Stomach (tissue), 19 donors: ENCODE measurements at regions of chr15 and their contacts with region 1.

Region 1: GRCh38 chr15:74768771-74769342 is 13.0 kb upstream of the CSK start:
- DNase-seq: peak; percentile 75
- H3K4me3 ChIP-seq: no peak overlapping the region
- H3K27ac ChIP-seq: no peak overlapping the region
- H3K4me1 ChIP-seq: peaks cover 0 to 18% (median 15%) of the 10 kb centered on the region in 4 donors
- H3K27me3 ChIP-seq: peaks cover 0 to 23% (median 0%) of the 10 kb centered on the region in 3 donors
- CTCF ChIP-seq: peak in 5 of 7 experiments; percentile 59 to 87 (median 74)
- EP300 ChIP-seq: no peak
- POLR2A ChIP-seq: no peak

Region 2: DNA sequence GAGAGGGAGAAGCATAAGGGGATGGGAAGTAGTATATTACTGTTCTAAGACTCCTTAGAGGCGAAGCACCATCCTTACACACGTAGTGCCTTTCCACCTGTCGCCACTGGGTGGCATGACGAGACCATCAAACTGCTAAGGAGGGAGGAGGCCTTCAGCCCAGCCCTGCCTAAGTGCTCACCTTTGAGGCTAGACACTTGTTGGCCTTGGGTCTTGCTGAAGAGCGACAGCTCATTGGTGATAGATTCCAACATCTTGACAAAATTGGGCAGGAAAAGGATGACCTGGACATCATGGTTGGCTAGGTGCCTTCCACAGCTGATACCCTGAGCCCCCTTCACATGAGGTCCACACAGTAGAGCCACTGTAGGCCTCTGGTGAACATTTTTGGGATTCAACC is 133.6 kb before region 1 on chr15:
- intact Hi-C with region 1: loop called (anchors 5 kb)
- DNase-seq: peak; percentile 72 to 86
- H3K4me3 ChIP-seq: no peak overlapping the region
- H3K27ac ChIP-seq: no peak overlapping the region
- H3K4me1 ChIP-seq: no peaks in the 10 kb centered on the region
- H3K27me3 ChIP-seq: no peaks in the 10 kb centered on the region
- CTCF ChIP-seq: peak in 5 of 7 experiments; percentile 82 to 92 (median 89)
- EP300 ChIP-seq: no peak
- POLR2A ChIP-seq: no peak

Region 3: GRCh38 chr15:74835307-74835823 is 66.5 kb after region 1 on chr15:
- intact Hi-C with region 1: loop called (anchors 5 kb)
- DNase-seq: peak; percentile 68 to 78
- H3K4me3 ChIP-seq: no peak overlapping the region
- H3K27ac ChIP-seq: no peak overlapping the region
- H3K4me1 ChIP-seq: peaks cover 0 to 16% (median 2%) of the 10 kb centered on the region in 4 donors
- H3K27me3 ChIP-seq: no peaks in the 10 kb centered on the region
- CTCF ChIP-seq: peak in 5 of 7 experiments; percentile 26 to 74 (median 64)
- EP300 ChIP-seq: no peak
- POLR2A ChIP-seq: no peak

Region 4: DNA sequence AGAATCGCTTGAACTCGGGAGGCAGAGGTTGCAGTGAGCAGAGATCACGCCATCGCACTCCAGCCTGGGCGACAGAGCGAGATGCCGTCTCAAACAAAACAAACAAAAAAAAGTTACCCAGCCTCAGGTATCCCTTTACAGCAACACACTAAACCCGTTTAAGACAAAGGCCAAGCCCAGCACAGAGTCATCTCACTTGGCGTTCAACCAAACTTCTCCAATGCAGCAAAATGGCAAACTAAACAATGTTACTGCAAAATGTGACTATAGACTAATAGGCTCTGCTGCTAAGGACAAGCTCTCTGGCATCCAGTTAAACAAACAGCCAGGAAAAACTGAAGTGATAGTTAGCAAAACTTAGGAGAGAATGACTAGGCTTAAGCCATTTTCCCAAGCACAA is 144.2 kb after region 1 on chr15:
- intact Hi-C with region 1: no loop called
- DNase-seq: no peak
- H3K4me3 ChIP-seq: no peak overlapping the region
- H3K27ac ChIP-seq: no peak overlapping the region
- H3K4me1 ChIP-seq: no peaks in the 10 kb centered on the region
- H3K27me3 ChIP-seq: no peaks in the 10 kb centered on the region
- CTCF ChIP-seq: no peak
- EP300 ChIP-seq: no peak
- POLR2A ChIP-seq: no peak

Region 5: GRCh38 chr15:74950078-74951000 is 181.5 kb after region 1 on chr15:
- intact Hi-C with region 1: loop called (anchors 5 kb)
- DNase-seq: peak; percentile 85 to 91
- H3K4me3 ChIP-seq: no peak overlapping the region
- H3K27ac ChIP-seq: no peak overlapping the region
- H3K4me1 ChIP-seq: peaks cover 10 to 26% (median 17%) of the 10 kb centered on the region in 4 donors
- H3K27me3 ChIP-seq: peaks cover 0 to 10% (median 0%) of the 10 kb centered on the region in 3 donors
- CTCF ChIP-seq: peak in 6 of 7 experiments; percentile 64 to 100 (median 96)
- EP300 ChIP-seq: no peak
- POLR2A ChIP-seq: no peak

Region 6: DNA sequence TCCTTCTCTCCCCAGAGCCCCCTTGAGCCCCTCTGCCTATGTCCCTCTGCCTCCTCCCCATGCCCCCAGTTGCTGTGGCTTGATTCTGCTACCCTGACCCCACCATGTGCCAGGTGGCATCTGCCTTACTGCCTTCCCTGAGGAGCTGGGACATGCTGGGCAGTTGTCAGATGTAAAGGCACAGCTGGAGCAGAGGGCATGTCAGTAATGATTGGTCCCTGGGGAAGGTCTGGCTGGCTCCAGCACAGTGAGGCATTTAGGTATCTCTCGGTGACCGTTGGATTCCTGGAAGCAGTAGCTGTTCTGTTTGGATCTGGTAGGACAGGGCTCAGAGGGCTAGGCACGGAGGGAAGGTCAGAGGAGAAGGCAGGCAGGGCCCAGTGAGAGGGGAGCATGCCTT is 251.1 kb after region 1 on chr15:
- intact Hi-C with region 1: no loop called
- DNase-seq: no peak
- H3K4me3 ChIP-seq: no peak overlapping the region
- H3K27ac ChIP-seq: no peak overlapping the region
- H3K4me1 ChIP-seq: peaks cover 11 to 13% (median 12%) of the 10 kb centered on the region in 4 donors
- H3K27me3 ChIP-seq: no peaks in the 10 kb centered on the region
- CTCF ChIP-seq: no peak
- EP300 ChIP-seq: no peak
- POLR2A ChIP-seq: no peak